AG04449 (cell line): ENCODE measurements at regions of chr14 and their contacts with region 1.

Region 1: GRCh38 chr14:63276492-63277342 is 42.0 kb downstream of the GPHB5 start:
- DNase-seq: peak; percentile 10
- H3K4me3 ChIP-seq: no peak overlapping the region
- CTCF ChIP-seq: peak; percentile 55

Region 2: DNA sequence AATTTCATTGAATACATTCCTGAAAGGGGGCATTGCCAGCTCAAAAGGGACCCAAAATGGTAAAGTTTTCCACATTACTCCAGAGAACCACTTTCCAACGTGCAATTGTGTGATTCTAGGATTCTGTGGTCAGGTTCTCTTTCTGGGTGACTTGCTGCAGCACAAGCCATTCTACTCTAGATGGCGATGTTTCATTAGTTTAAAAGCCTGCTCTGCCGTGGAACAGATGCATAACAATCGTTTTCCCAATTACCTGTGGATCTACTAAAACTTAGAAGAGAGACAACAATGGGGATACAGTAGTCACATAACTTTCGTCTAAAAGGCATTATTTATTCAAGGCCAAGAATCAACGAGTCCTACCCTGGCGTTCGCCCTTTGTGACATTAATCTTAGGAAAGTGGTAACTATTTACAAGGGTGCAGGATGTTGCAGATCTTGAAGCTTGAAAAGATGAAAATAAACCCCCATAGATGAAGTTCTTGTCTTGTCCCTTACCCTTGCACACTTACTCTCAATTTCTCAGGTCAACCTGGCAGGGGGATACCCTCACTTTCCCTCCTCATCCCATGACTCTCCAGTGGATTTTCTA is 1113.6 kb before region 1 on chr14:
- CTCF ChIA-PET with region 1: interaction called, 16 read pairs
- POLR2A ChIA-PET with region 1: no interaction called
- DNase-seq: no peak
- H3K4me3 ChIP-seq: no peak overlapping the region
- CTCF ChIP-seq: peak; percentile 65

Region 3: GRCh38 chr14:62179367-62180018 is 1097.2 kb before region 1 on chr14:
- CTCF ChIA-PET with region 1: interaction called, 64 read pairs
- POLR2A ChIA-PET with region 1: no interaction called
- DNase-seq: peak; percentile 68
- H3K4me3 ChIP-seq: no peak overlapping the region
- CTCF ChIP-seq: peak; percentile 76

Region 4: GRCh38 chr14:62864588-62864987 is 412.1 kb before region 1 on chr14:
- CTCF ChIA-PET with region 1: no interaction called
- POLR2A ChIA-PET with region 1: no interaction called
- DNase-seq: no peak
- H3K4me3 ChIP-seq: no peak overlapping the region
- CTCF ChIP-seq: no peak

Region 5: GRCh38 chr14:63174760-63175211 is 101.9 kb before region 1 on chr14:
- CTCF ChIA-PET with region 1: interaction called, 166 read pairs
- POLR2A ChIA-PET with region 1: no interaction called
- DNase-seq: no peak
- H3K4me3 ChIP-seq: no peak overlapping the region
- CTCF ChIP-seq: peak; percentile 58

Region 6: GRCh38 chr14:63266106-63266505 is 10.6 kb before region 1 on chr14:
- CTCF ChIA-PET with region 1: interaction called, 10 read pairs
- POLR2A ChIA-PET with region 1: no interaction called
- DNase-seq: no peak
- H3K4me3 ChIP-seq: no peak overlapping the region
- CTCF ChIP-seq: no peak